Heart left ventricle (tissue), 16 donors: ENCODE measurements at regions of chr10 and their contacts with region 1.

Region 1: DNA sequence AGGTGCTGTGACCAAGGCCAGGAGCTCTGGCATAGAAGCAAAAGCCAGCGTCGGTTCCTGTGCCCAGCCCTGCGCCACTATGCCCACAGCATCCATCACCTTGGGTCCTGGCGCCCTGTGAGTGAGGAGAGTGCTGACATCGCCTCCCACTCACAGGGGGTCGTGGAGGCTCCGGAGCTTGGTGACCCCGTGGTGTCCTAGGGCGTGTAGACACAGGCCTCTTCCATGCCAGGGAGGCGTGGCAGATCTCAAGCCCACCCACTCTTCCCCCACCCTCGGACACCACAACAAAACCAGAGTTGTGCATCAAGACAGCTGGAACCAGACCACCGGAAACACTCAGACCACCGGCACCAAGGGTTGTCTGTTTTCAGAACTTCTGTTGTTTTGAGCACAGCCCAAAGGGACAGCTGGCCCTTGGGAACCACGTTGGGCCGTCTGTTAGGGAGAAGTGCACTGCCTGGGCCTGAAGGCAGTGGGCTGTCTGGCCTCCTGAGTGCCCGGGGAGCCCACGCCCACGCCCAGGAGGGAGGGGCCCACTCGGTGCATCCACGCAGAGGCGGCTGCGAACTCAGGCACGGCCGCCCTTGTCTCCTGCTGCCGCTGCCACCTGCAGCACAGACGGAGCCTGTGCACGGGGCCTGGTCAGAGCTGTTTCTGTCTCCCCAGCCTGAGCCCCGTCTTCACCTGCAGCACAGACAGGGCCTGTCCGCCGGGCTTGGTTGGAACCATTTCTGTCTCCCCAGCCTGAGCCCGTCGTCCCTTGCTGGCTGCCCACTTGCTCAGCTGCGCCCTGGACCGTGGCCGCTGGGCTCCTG is 106.3 kb downstream of the INPP5A start:
- DNase-seq: peak in 1 of 5 donors; percentile 50
- ATAC-seq: peak in 3 of 4 donors; percentile 4 to 11 (median 10)
- H3K4me3 ChIP-seq: no peak overlapping the region
- H3K27ac ChIP-seq: no peak overlapping the region
- H3K4me1 ChIP-seq: peaks cover 0 to 19% (median 1%) of the 10 kb centered on the region in 12 donors
- H3K27me3 ChIP-seq: no peaks in the 10 kb centered on the region
- CTCF ChIP-seq: no peak
- POLR2A ChIP-seq: no peak

Region 2: GRCh38 chr10:132229834-132230556 is 413.9 kb before region 1 on chr10:
- intact Hi-C with region 1: loop called in 4 of 10 experiments (anchors 10 kb)
- DNase-seq: peak in 3 of 5 donors; percentile 45 to 79 (median 49)
- ATAC-seq: peak; percentile 45 to 55 (median 48)
- H3K4me3 ChIP-seq: peak overlapping the region in 9 of 12 donors; percentile 28 to 54 (median 40)
- H3K27ac ChIP-seq: peak overlapping the region in 9 of 12 donors; percentile 5 to 87 (median 39)
- H3K4me1 ChIP-seq: peaks cover 0 to 58% (median 0%) of the 10 kb centered on the region in 12 donors
- H3K27me3 ChIP-seq: no peaks in the 10 kb centered on the region
- CTCF ChIP-seq: no peak
- POLR2A ChIP-seq: no peak

Region 3: GRCh38 chr10:132387764-132388210 is 256.1 kb before region 1 on chr10:
- intact Hi-C with region 1: loop called in 8 of 10 experiments (anchors 2 to 10 kb)
- DNase-seq: peak; percentile 68 to 90 (median 76)
- ATAC-seq: peak; percentile 51 to 77 (median 70)
- H3K4me3 ChIP-seq: no peak overlapping the region
- H3K27ac ChIP-seq: peak overlapping the region in 2 of 12 donors; percentile 13 to 37
- H3K4me1 ChIP-seq: peaks cover 0 to 20% (median 6%) of the 10 kb centered on the region in 12 donors
- H3K27me3 ChIP-seq: peaks cover 0 to 3% (median 0%) of the 10 kb centered on the region in 9 donors
- CTCF ChIP-seq: peak; percentile 44 to 69 (median 61)
- POLR2A ChIP-seq: no peak

Region 4: GRCh38 chr10:132421392-132421877 is 222.5 kb before region 1 on chr10:
- intact Hi-C with region 1: no loop called
- DNase-seq: peak; percentile 82 to 90 (median 88)
- ATAC-seq: peak; percentile 87 to 93 (median 90)
- H3K4me3 ChIP-seq: peak overlapping the region in 8 of 12 donors; percentile 7 to 27 (median 18)
- H3K27ac ChIP-seq: peak overlapping the region; percentile 48 to 94 (median 90)
- H3K4me1 ChIP-seq: peaks cover 0 to 68% (median 45%) of the 10 kb centered on the region in 12 donors
- H3K27me3 ChIP-seq: no peaks in the 10 kb centered on the region
- CTCF ChIP-seq: no peak
- POLR2A ChIP-seq: no peak